ENCODE measurements at regions of chr15 and their contacts with region 1.

Region 1: GRCh38 chr15:74842581-74843444 is at the start of gene ULK3:
- DNase-seq: peak; percentile 93 to 95
- ATAC-seq: peak; percentile 92 to 98 (median 93)
- H3K4me3 ChIP-seq: peak within 1 kb of the TSS; percentile 90
- H3K4me3 Mint-ChIP-seq: peak within 1 kb of the TSS; percentile 91
- H3K27ac ChIP-seq: peak within 1 kb of the TSS; percentile 80
- H3K27ac Mint-ChIP-seq: peak within 1 kb of the TSS; percentile 91
- H3K4me1 ChIP-seq: peaks cover 48% of the 10 kb centered on the region
- H3K4me1 Mint-ChIP-seq: peaks cover 18 to 49% of the 10 kb centered on the region in 2 donors
- H3K27me3 ChIP-seq: no peaks in the 10 kb centered on the region
- H3K27me3 Mint-ChIP-seq: no peaks in the 10 kb centered on the region
- CTCF ChIP-seq: peak; percentile 70
- total RNA-seq, gene ULK3: 54.8 to 75.1 (median 64.7) TPM

Region 2: DNA sequence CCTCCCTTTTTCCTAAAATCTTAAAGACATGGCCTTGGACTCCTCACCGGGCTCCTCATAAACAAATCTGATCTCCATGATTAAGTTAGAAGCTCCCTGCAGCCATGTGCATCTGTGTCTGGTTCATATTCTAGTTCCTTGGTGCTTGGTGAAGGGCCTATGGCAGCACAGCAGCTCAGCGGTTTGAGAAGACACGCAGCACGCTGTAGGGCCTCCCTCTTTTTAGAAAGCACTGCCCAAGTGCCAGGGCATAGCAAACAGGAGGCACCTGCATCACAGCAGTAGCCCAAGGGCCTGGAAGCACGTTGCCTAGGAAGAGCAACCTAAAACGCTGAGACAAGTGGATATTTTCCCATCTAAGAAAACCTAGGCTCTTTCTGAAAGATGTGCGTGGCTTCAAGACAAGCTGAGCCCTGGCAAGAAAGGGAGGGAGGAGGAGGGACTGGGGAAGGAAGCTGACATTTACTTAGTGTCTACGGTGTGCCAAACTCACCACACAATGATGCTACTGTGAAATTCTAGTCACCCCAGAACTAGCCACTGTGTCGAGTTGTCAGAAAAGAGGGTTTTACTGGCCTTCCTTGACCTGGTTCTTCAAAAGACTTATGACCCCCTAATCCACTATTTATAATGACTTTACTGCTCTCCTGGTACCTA is 15.0 kb after region 1 on chr15:
- intact Hi-C with region 1: loop called (anchors 2 kb)
- DNase-seq: peak in 1 of 2 donors; percentile 30
- ATAC-seq: peak; percentile 84 to 92 (median 90)
- H3K4me3 ChIP-seq: no peak overlapping the region
- H3K4me3 Mint-ChIP-seq: peak overlapping the region; percentile 50
- H3K27ac ChIP-seq: peak overlapping the region; percentile 34
- H3K27ac Mint-ChIP-seq: peak overlapping the region; percentile 61 to 88
- H3K4me1 ChIP-seq: peaks cover 40% of the 10 kb centered on the region
- H3K4me1 Mint-ChIP-seq: peaks cover 38 to 46% of the 10 kb centered on the region in 2 donors
- H3K27me3 ChIP-seq: no peaks in the 10 kb centered on the region
- H3K27me3 Mint-ChIP-seq: no peaks in the 10 kb centered on the region
- CTCF ChIP-seq: no peak

Region 3: GRCh38 chr15:74873036-74873755 is 30.4 kb after region 1 on chr15 and contains the start of gene SCAMP2:
- intact Hi-C with region 1: loop called (anchors 2 kb)
- DNase-seq: peak; percentile 90 to 94
- ATAC-seq: peak; percentile 95 to 97 (median 96)
- H3K4me3 ChIP-seq: peak within 1 kb of the TSS; percentile 81
- H3K4me3 Mint-ChIP-seq: peak within 1 kb of the TSS; percentile 99
- H3K27ac ChIP-seq: peak within 1 kb of the TSS; percentile 96
- H3K27ac Mint-ChIP-seq: peak within 1 kb of the TSS; percentile 95 to 98
- H3K4me1 ChIP-seq: peaks cover 47% of the 10 kb centered on the region
- H3K4me1 Mint-ChIP-seq: peaks cover 43 to 45% of the 10 kb centered on the region in 2 donors
- H3K27me3 ChIP-seq: no peaks in the 10 kb centered on the region
- H3K27me3 Mint-ChIP-seq: no peaks in the 10 kb centered on the region
- CTCF ChIP-seq: no peak
- total RNA-seq, gene SCAMP2: 78.8 to 101 (median 92.8) TPM